Naive thymus-derived CD4-positive, alpha-beta T cell (primary cell): ENCODE measurements at regions of chr19 and their contacts with region 1.

Region 1: DNA sequence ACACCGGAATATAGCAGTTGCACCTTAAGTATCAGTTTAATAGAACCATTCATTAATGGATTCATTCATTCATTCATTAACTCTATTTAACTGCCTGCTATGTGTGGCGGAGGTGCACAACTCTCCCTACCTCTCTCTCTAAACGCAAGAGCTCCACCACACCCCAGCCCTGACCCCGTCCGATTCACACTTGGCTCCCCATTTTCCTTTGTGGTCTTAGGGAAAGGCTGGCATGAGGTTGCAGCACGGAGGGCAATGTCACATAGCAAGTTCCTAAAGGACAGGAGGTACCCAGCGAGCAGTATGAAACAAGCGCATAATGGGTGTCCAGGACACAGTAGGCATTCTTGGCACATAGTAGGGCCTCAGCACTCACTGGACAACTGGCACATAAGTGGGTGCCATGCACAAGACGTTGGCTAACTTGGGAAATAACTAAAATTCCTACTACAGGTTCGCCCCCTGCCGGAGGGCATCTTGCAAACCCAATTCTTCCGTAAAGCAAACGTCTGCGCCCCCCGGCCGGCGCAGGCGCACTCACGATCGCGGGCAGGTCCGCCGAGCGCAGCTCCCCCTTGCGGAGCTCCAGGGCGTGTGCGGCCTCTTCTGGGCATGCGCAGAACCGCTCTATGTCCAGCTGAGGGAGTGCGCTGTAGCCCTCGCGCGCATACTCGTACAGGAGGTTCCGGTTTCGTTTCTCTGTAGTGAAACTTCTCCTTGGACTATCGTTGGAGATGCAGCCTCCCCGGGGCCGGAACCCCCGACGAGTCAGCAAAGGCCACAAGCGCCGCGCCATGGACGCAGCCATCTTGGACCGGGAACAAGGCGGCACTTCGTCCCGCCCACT is at the start of gene SARS2:
- DNase-seq: peak; percentile 92 to 98 (median 96)
- ATAC-seq: peak; percentile 85
- H3K4me3 ChIP-seq: peak within 1 kb of the TSS; percentile 94
- H3K4me3 Mint-ChIP-seq: peak within 1 kb of the TSS; percentile 94 to 100 (median 98)
- H3K27ac ChIP-seq: peak within 1 kb of the TSS; percentile 91
- H3K27ac Mint-ChIP-seq: peak within 1 kb of the TSS; percentile 94 to 100 (median 99)
- H3K4me1 ChIP-seq: peaks cover 21 to 55% of the 10 kb centered on the region in 2 donors
- H3K4me1 Mint-ChIP-seq: peaks cover 22 to 47% (median 39%) of the 10 kb centered on the region in 7 donors
- H3K27me3 ChIP-seq: no peaks in the 10 kb centered on the region
- H3K27me3 Mint-ChIP-seq: peaks cover 0 to 2% (median 0%) of the 10 kb centered on the region in 5 donors
- total RNA-seq, gene SARS2: 17.5 to 35.6 (median 25.4) TPM

Region 2: DNA sequence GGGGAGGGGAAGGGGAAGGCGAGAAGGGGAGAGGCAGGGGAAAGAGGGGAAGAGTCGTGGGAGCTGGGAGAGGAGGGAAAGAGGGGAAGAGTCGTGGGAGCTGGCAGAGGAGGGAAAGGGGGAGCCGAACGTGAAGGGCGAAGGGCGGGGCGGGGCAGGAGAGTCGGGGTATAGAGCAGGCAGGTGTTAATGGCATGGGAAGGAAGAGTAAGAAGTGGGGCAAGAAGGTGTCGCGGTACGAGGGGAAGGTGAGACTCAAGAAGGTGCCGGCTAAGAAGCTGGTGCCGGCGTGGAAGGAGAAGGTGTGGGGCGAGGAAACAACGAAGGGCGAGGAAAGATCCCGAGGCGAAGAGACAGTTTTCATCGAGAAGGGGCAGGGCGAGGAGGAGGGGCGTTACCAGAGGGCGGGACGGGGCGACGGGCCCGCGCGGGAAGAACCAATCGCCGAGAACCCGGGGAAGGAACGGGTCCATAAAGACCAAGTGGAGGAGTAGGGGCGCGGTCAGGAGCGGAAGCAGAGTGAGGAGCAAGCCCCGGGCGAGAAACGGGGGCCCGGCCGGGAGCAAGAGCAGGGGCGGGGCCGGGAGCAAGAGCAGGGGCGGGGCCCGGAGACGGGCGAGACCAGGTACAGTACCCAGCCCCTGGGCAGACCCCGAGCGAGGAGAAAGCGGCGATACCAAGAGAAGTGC is 594.1 kb before region 1 on chr19:
- CTCF ChIA-PET with region 1: no interaction called
- POLR2A ChIA-PET with region 1: no interaction called
- intact Hi-C with region 1: loop called in 1 of 2 experiments (anchors 1 kb)
- DNase-seq: peak; percentile 86 to 94 (median 93)
- ATAC-seq: peak; percentile 77
- H3K4me3 ChIP-seq: peak overlapping the region; percentile 92
- H3K4me3 Mint-ChIP-seq: peak overlapping the region; percentile 92 to 100 (median 96)
- H3K27ac ChIP-seq: peak overlapping the region; percentile 86
- H3K27ac Mint-ChIP-seq: peak overlapping the region; percentile 91 to 100 (median 97)
- H3K4me1 ChIP-seq: peaks cover 3 to 5% of the 10 kb centered on the region in 2 donors
- H3K4me1 Mint-ChIP-seq: peaks cover 16 to 28% (median 17%) of the 10 kb centered on the region in 7 donors
- H3K27me3 ChIP-seq: no peaks in the 10 kb centered on the region
- H3K27me3 Mint-ChIP-seq: no peaks in the 10 kb centered on the region

Region 3: GRCh38 chr19:38544034-38544958 is 385.9 kb before region 1 on chr19:
- CTCF ChIA-PET with region 1: no interaction called
- POLR2A ChIA-PET with region 1: no interaction called
- intact Hi-C with region 1: loop called (anchors 1 kb)
- DNase-seq: peak in 8 of 9 donors; percentile 36 to 68 (median 53)
- ATAC-seq: peak; percentile 88
- H3K4me3 ChIP-seq: no peak overlapping the region
- H3K4me3 Mint-ChIP-seq: peak overlapping the region in 7 of 10 donors; percentile 0 to 65 (median 45)
- H3K27ac ChIP-seq: no peak overlapping the region
- H3K27ac Mint-ChIP-seq: peak overlapping the region in 7 of 9 donors; percentile 1 to 85 (median 13)
- H3K4me1 ChIP-seq: peaks cover 4 to 14% of the 10 kb centered on the region in 2 donors
- H3K4me1 Mint-ChIP-seq: peaks cover 9 to 34% (median 19%) of the 10 kb centered on the region in 7 donors
- H3K27me3 ChIP-seq: no peaks in the 10 kb centered on the region
- H3K27me3 Mint-ChIP-seq: no peaks in the 10 kb centered on the region

Region 4: DNA sequence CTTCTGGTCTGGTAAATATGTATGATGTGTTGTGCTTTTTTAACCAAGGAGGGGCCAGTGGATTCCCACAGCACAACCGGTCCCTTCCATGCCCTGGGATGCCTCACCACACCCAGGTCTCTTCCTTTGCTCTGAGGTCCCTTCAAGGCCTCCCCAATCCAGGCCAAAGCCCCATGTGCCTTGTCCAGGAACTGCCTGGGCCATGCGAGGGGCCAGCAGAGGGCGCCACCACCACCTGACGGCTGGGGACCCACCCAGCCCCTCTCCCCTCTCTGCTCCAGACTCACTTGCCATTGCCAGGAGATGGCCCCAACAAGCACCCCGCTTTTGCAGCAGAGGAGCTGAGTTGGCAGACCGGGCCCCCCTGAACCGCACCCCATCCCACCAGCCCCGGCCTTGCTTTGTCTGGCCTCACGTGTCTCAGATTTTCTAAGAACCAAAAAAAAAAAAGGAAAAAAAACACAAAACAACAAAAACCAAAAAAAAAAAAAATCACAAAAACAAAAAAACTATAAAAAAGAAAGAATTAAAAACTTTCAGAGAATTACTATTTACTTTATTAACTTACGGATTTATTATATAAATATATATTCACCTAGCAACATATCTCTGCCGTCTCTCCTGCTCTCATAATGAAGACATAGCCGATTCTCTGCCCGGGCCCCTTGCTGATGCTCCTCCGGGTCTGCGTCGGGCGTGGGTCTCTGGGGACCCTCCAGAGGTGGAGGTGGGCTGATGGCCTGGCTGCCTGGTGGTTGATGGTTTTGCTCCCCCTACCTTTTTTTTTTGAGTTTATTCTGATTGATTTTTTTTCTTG is 200.3 kb before region 1 on chr19:
- CTCF ChIA-PET with region 1: interaction called, 6 read pairs
- POLR2A ChIA-PET with region 1: interaction called, 17 read pairs
- intact Hi-C with region 1: loop called (anchors 1 kb)
- DNase-seq: peak; percentile 58 to 83 (median 73)
- ATAC-seq: peak; percentile 78
- H3K4me3 ChIP-seq: no peak overlapping the region
- H3K4me3 Mint-ChIP-seq: no peak overlapping the region
- H3K27ac ChIP-seq: no peak overlapping the region
- H3K27ac Mint-ChIP-seq: peak overlapping the region in 3 of 9 donors; percentile 23 to 48 (median 30)
- H3K4me1 ChIP-seq: peaks cover 9 to 10% of the 10 kb centered on the region in 2 donors
- H3K4me1 Mint-ChIP-seq: peaks cover 5 to 39% (median 13%) of the 10 kb centered on the region in 7 donors
- H3K27me3 ChIP-seq: no peaks in the 10 kb centered on the region
- H3K27me3 Mint-ChIP-seq: no peaks in the 10 kb centered on the region

Region 5: DNA sequence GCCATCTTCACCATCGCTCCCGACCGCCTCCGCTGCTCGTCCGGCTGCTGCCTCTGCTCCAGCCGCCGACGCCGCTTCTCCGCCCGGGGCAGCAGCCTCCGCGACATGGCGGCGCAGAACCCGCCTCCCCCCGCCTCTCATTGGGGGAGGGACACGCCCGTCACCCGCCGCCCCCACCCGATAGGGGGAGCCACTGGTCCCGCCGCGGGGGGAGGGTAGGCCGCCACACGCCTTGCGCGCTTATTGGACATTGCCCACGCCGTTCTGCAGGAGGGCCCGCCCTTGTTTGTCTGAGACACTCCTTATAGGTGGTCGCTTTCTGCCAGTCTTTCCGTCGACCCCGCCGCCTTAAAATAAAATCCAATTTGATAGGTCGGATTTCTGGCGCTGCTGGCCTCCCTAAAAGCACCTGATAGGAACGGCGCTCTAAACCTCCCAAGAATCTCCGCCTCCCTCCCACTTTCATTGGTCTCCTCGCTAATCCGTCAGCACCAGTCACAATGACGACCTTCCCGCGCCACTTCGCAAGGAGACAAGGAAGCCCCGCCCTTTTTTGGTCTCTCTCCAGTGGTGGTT is 80.2 kb before region 1 on chr19 and contains the start of gene HNRNPL:
- CTCF ChIA-PET with region 1: interaction called, 5 read pairs
- POLR2A ChIA-PET with region 1: interaction called, 8 read pairs
- intact Hi-C with region 1: loop called (anchors 1 kb)
- DNase-seq: peak; percentile 99 to 100 (median 100)
- ATAC-seq: peak; percentile 78
- H3K4me3 ChIP-seq: peak within 1 kb of the TSS; percentile 81
- H3K4me3 Mint-ChIP-seq: peak within 1 kb of the TSS; percentile 88 to 99 (median 96)
- H3K27ac ChIP-seq: peak within 1 kb of the TSS; percentile 96
- H3K27ac Mint-ChIP-seq: peak within 1 kb of the TSS; percentile 94 to 100 (median 99)
- H3K4me1 ChIP-seq: peaks cover 24 to 41% of the 10 kb centered on the region in 2 donors
- H3K4me1 Mint-ChIP-seq: peaks cover 30 to 67% (median 50%) of the 10 kb centered on the region in 7 donors
- H3K27me3 ChIP-seq: no peaks in the 10 kb centered on the region
- H3K27me3 Mint-ChIP-seq: peaks cover 0 to 5% (median 0%) of the 10 kb centered on the region in 5 donors
- total RNA-seq, gene HNRNPL: 339 to 539 (median 505) TPM

Region 6: GRCh38 chr19:39435499-39436349 is 505.6 kb after region 1 on chr19 and contains the start of gene RPS16:
- CTCF ChIA-PET with region 1: no interaction called
- POLR2A ChIA-PET with region 1: no interaction called
- intact Hi-C with region 1: loop called in 1 of 2 experiments (anchors 2 kb)
- DNase-seq: peak; percentile 93 to 100 (median 98)
- ATAC-seq: peak; percentile 98
- H3K4me3 ChIP-seq: peak within 1 kb of the TSS; percentile 98
- H3K4me3 Mint-ChIP-seq: peak within 1 kb of the TSS; percentile 92 to 100 (median 98)
- H3K27ac ChIP-seq: peak within 1 kb of the TSS; percentile 97
- H3K27ac Mint-ChIP-seq: peak within 1 kb of the TSS; percentile 95 to 100 (median 99)
- H3K4me1 ChIP-seq: peaks cover 27% of the 10 kb centered on the region in 2 donors
- H3K4me1 Mint-ChIP-seq: peaks cover 20 to 53% (median 40%) of the 10 kb centered on the region in 7 donors
- H3K27me3 ChIP-seq: no peaks in the 10 kb centered on the region
- H3K27me3 Mint-ChIP-seq: peaks cover 0 to 5% (median 0%) of the 10 kb centered on the region in 5 donors
- total RNA-seq, gene RPS16: 2,281 to 4,335 (median 4,063) TPM